ENCODE measurements at regions of chr22 and their contacts with region 1.

Region 1: DNA sequence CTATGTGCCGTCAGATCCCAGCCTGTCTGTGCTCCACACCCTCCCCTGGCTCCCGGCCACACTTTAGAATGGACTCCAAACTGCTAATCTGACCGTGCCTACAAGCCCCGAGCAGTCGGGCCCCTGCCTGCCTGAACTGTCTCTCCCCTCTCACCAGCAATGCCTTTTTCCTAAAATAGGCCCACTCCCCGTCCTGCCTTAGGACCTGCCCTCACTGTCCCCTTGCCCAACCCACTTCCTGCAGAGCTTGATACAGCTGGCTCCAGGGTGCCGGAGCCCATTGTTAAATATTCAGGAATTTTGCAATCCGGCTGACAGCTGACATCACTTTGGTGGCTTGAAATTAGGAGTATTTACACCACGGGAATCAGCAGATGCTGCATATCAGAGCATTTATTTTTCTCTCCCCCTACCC is 21.4 kb downstream of the MN1 start:
- DNase-seq: peak in 2 of 5 donors; percentile 60 to 76
- ATAC-seq: peak in 3 of 4 donors; percentile 64 to 70 (median 65)
- H3K4me3 ChIP-seq: no peak overlapping the region
- H3K27ac ChIP-seq: peak overlapping the region in 10 of 12 donors; percentile 9 to 80 (median 62)
- H3K4me1 ChIP-seq: peaks cover 0 to 81% (median 32%) of the 10 kb centered on the region in 12 donors
- H3K27me3 ChIP-seq: no peaks in the 10 kb centered on the region
- CTCF ChIP-seq: no peak
- POLR2A ChIP-seq: no peak

Region 2: GRCh38 chr22:27726697-27727449 is 53.3 kb before region 1 on chr22:
- intact Hi-C with region 1: loop called in 3 of 10 experiments (anchors 5 to 10 kb)
- DNase-seq: peak; percentile 62 to 88 (median 83)
- ATAC-seq: peak; percentile 83 to 96 (median 95)
- H3K4me3 ChIP-seq: peak overlapping the region in 1 of 12 donors; percentile 19
- H3K27ac ChIP-seq: peak overlapping the region; percentile 45 to 96 (median 84)
- H3K4me1 ChIP-seq: peaks cover 0 to 28% (median 14%) of the 10 kb centered on the region in 12 donors
- H3K27me3 ChIP-seq: no peaks in the 10 kb centered on the region
- CTCF ChIP-seq: peak in 2 of 12 donors; percentile 5 to 7
- POLR2A ChIP-seq: no peak

Measured in heart left ventricle (tissue), 16 donors.